ENCODE measurements at regions of chr6 and their contacts with region 1.

Region 1: GRCh38 chr6:111823831-111824607 is 49.2 kb downstream of the FYN start:
- DNase-seq: peak; percentile 88
- H3K4me3 ChIP-seq: peak overlapping the region in 1 of 3 experiments; percentile 58
- H3K27ac ChIP-seq: peak overlapping the region; percentile 81
- H3K4me1 ChIP-seq: peaks cover 25% of the 10 kb centered on the region
- H3K27me3 ChIP-seq: no peaks in the 10 kb centered on the region
- CTCF ChIP-seq: no peak
- POLR2A ChIP-seq: no peak

Region 2: GRCh38 chr6:111322153-111322552 is 501.9 kb before region 1 on chr6:
- CTCF ChIA-PET with region 1: no interaction called
- POLR2A ChIA-PET with region 1: no interaction called
- dilution Hi-C with region 1: no loop called
- intact Hi-C with region 1: no loop called
- DNase-seq: no peak
- H3K4me3 ChIP-seq: no peak overlapping the region
- H3K27ac ChIP-seq: no peak overlapping the region
- H3K4me1 ChIP-seq: no peaks in the 10 kb centered on the region
- H3K27me3 ChIP-seq: no peaks in the 10 kb centered on the region
- CTCF ChIP-seq: no peak
- POLR2A ChIP-seq: no peak

Region 3: GRCh38 chr6:111382476-111383300 is 441.3 kb before region 1 on chr6:
- CTCF ChIA-PET with region 1: no interaction called
- POLR2A ChIA-PET with region 1: no interaction called
- dilution Hi-C with region 1: no loop called
- intact Hi-C with region 1: no loop called
- DNase-seq: no peak
- H3K4me3 ChIP-seq: no peak overlapping the region
- H3K27ac ChIP-seq: no peak overlapping the region
- H3K4me1 ChIP-seq: no peaks in the 10 kb centered on the region
- H3K27me3 ChIP-seq: no peaks in the 10 kb centered on the region
- CTCF ChIP-seq: no peak
- POLR2A ChIP-seq: no peak

Region 4: DNA sequence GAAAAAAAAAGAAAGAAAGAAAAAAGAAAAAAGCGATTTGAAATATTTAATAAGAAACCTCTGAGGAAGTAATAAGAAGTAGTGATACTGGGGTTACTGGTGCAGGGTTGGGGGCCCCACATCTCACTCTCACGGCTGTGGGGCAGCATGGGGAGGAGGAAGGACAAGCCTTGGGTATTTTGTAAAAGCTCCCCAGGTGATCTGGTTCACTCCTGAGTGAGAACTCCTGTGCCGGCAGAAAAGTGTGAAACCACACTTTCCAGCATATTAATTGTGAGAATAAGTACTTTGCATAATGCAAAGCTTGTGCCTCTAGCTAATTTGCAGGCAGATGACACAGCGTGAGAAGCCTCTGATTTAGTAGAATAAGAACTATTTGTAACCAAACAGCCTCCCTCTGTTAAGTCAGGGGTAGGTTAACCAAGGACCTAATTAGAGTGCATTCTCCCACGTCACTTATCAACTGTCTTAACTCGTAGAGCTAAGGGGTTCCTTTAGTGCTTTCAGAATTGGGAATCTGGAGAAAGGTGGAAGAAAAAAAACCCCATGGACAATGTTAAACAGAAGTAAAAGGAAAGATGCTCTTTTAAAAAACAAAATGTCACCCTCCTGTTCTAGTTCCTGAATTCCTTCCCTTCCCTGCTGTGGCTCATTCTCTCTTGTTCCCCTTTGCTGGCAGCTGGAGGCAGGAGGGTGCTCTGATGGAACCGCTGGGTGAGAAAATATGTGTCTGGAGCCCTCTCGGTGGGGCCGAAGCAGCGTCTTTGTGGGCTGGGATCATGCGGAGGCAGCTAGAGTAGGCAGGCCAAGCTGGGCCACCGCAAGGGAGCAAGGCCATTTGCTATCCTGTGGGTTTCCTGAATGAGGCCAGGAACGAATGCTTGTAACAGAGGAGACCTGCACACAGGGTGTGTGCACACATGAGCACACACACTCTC is 59.5 kb before region 1 on chr6:
- CTCF ChIA-PET with region 1: interaction called, 11 read pairs
- POLR2A ChIA-PET with region 1: no interaction called
- dilution Hi-C with region 1: no loop called
- intact Hi-C with region 1: no loop called
- DNase-seq: no peak
- H3K4me3 ChIP-seq: no peak overlapping the region
- H3K27ac ChIP-seq: no peak overlapping the region
- H3K4me1 ChIP-seq: peaks cover 19% of the 10 kb centered on the region
- H3K27me3 ChIP-seq: no peaks in the 10 kb centered on the region
- CTCF ChIP-seq: no peak
- POLR2A ChIP-seq: no peak

Region 5: GRCh38 chr6:111777357-111777756 is 46.7 kb before region 1 on chr6:
- CTCF ChIA-PET with region 1: no interaction called
- POLR2A ChIA-PET with region 1: no interaction called
- dilution Hi-C with region 1: no loop called
- intact Hi-C with region 1: no loop called
- DNase-seq: no peak
- H3K4me3 ChIP-seq: no peak overlapping the region
- H3K27ac ChIP-seq: no peak overlapping the region
- H3K4me1 ChIP-seq: no peaks in the 10 kb centered on the region
- H3K27me3 ChIP-seq: no peaks in the 10 kb centered on the region
- CTCF ChIP-seq: no peak
- POLR2A ChIP-seq: no peak

Region 6: GRCh38 chr6:112343390-112343789 is 519.4 kb after region 1 on chr6:
- CTCF ChIA-PET with region 1: no interaction called
- POLR2A ChIA-PET with region 1: no interaction called
- dilution Hi-C with region 1: no loop called
- intact Hi-C with region 1: no loop called
- DNase-seq: no peak
- H3K4me3 ChIP-seq: no peak overlapping the region
- H3K27ac ChIP-seq: no peak overlapping the region
- H3K4me1 ChIP-seq: no peaks in the 10 kb centered on the region
- H3K27me3 ChIP-seq: peaks cover 0 to 2% of the 10 kb centered on the region in 2 experiments
- CTCF ChIP-seq: no peak
- POLR2A ChIP-seq: no peak

Measured in endothelial cell of umbilical vein (primary cell).